Posterior vena cava (tissue), 2 donors: ENCODE measurements at regions of chr4 and their contacts with region 1.

Region 1: DNA sequence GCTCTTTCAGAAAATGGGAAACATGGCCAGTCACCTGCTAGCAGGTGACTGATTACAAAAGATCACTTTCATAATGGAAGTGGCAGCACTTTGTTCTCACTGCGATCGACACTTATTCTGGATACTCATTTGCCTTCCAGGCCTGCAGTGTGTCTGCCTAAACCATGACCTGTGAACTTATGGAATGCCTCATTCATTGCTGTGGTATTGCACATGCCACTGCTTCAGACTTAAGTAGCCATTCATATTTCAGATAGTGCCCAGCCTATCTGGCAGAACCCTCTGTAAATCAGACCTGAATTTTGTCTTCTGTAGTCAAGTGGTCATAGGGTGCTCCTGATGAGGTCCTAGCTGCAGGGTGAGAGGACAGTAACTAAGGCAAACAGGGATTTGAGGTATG is 23.3 kb upstream of the MGST2 start:
- DNase-seq: no peak

Region 2: DNA sequence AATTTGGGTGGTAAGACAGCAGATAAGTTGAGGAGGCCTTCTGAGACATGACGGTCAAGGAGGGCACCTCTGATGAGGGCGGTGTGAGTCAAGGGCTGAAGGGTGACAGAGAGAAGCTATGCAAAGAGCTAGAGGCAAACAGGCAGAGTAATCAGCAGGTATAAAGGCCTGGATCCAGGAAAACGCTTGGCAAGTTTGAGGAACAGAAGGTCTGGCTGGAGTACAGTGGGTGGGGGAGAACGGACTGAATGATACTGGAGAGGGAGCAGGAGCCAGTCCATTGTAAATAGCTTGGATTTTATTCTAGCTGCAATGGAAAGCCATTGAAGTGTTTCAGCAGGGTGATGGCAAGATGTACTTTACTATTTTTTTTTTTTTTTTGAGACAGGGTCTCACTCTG is 149.2 kb before region 1 on chr4:
- intact Hi-C with region 1: loop called in 1 of 2 experiments (anchors 10 kb)
- DNase-seq: no peak

Region 3: GRCh38 chr4:139603576-139604387 is 38.6 kb before region 1 on chr4:
- intact Hi-C with region 1: loop called in 1 of 2 experiments (anchors 5 kb)
- DNase-seq: no peak

Region 4: GRCh38 chr4:139761461-139761860 is 119.1 kb after region 1 on chr4:
- intact Hi-C with region 1: no loop called
- DNase-seq: no peak

Region 5: DNA sequence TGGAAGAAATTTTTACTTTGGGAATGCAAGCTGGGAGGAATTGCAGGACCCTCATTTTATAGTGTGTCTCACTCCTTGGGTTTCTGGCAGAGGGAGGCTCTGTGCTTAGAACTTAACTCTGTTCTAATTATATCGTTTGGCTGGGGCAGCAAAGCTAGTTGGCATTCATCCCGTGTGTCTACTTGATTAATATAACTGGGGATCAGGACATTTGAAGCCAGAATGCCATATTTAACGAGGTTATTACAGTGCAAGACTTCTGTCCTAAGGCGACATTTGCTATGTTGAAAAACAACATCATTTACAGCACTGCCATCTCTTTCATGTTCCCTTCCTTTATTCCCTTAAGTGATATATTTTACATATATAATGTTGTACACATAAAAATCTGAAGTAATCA is 1292.9 kb after region 1 on chr4:
- intact Hi-C with region 1: no loop called
- DNase-seq: no peak